Activated CD4-positive, alpha-beta T cell treated with anti-CD3 and anti-CD28 coated beads, Interleukin-2, amount 10 ng/mL, durations not matched to agents 24 days and 14 days (primary cell): ENCODE measurements at regions of chr10 and their contacts with region 1.

Region 1: GRCh38 chr10:4034907-4035598 is 250.0 kb upstream of the KLF6 start:
- DNase-seq: peak; percentile 83
- H3K4me3 Mint-ChIP-seq: peak overlapping the region; percentile 73
- H3K27ac Mint-ChIP-seq: peak overlapping the region; percentile 84
- H3K4me1 Mint-ChIP-seq: peaks cover 36% of the 10 kb centered on the region
- H3K27me3 Mint-ChIP-seq: no peaks in the 10 kb centered on the region

Region 2: GRCh38 chr10:3797750-3798149 is 237.3 kb before region 1 on chr10:
- intact Hi-C with region 1: loop called (anchors 5 kb)
- DNase-seq: no peak
- H3K4me3 Mint-ChIP-seq: peak overlapping the region; percentile 40
- H3K27ac Mint-ChIP-seq: peak overlapping the region; percentile 95
- H3K4me1 Mint-ChIP-seq: peaks cover 45% of the 10 kb centered on the region
- H3K27me3 Mint-ChIP-seq: no peaks in the 10 kb centered on the region

Region 3: GRCh38 chr10:3873728-3874461 is 161.2 kb before region 1 on chr10:
- intact Hi-C with region 1: loop called (anchors 5 kb)
- DNase-seq: peak; percentile 81
- H3K4me3 Mint-ChIP-seq: peak overlapping the region; percentile 14
- H3K27ac Mint-ChIP-seq: peak overlapping the region; percentile 88
- H3K4me1 Mint-ChIP-seq: peaks cover 52% of the 10 kb centered on the region
- H3K27me3 Mint-ChIP-seq: no peaks in the 10 kb centered on the region

Region 4: GRCh38 chr10:3972460-3973301 is 62.4 kb before region 1 on chr10:
- intact Hi-C with region 1: loop called (anchors 2 kb)
- DNase-seq: peak; percentile 87
- H3K4me3 Mint-ChIP-seq: peak overlapping the region; percentile 88
- H3K27ac Mint-ChIP-seq: peak overlapping the region; percentile 99
- H3K4me1 Mint-ChIP-seq: peaks cover 41% of the 10 kb centered on the region
- H3K27me3 Mint-ChIP-seq: no peaks in the 10 kb centered on the region

Region 5: DNA sequence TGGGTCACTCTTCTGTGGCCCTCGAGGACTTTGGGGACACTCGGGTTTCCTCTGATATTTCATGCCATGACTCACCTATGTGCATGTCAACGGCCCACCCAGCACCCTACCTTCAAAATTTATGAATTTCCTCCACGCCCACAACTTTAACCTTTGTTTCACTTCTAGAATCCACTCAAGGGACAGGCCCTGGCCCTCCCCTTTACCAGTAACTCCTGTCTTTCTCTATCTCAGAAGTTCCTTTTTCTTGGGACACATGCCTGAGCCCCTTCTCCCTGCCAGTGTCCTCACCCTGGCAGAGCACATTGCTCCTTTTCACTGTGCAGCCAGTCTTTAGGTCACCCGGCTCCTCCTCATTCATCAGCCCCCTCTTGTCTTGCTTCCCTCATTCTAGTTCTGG is 32.5 kb after region 1 on chr10:
- intact Hi-C with region 1: loop called (anchors 5 kb)
- DNase-seq: peak; percentile 69
- H3K4me3 Mint-ChIP-seq: no peak overlapping the region
- H3K27ac Mint-ChIP-seq: no peak overlapping the region
- H3K4me1 Mint-ChIP-seq: peaks cover 15% of the 10 kb centered on the region
- H3K27me3 Mint-ChIP-seq: no peaks in the 10 kb centered on the region

Region 6: DNA sequence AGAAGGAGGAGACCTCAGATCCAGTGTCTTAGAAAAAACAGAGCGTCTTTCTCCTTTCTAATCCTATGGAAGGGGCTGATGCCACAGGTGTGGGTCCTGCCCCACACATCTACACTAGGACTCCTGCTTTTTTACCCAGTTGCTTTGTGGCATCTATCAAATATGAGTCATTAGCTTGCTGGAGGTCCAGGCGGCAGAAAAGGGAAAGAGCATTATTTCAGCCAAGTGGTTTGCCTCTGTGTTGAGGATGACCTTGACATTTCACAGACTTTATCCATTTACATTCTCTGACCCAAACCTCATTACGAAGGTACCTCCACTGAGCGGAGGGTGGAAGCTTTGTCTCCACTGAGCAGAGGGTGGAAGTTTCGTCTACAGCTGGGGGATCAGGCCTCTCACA is 58.4 kb after region 1 on chr10:
- intact Hi-C with region 1: no loop called
- DNase-seq: peak; percentile 42
- H3K4me3 Mint-ChIP-seq: no peak overlapping the region
- H3K27ac Mint-ChIP-seq: no peak overlapping the region
- H3K4me1 Mint-ChIP-seq: peaks cover 1% of the 10 kb centered on the region
- H3K27me3 Mint-ChIP-seq: peaks cover 4% of the 10 kb centered on the region

Region 7: DNA sequence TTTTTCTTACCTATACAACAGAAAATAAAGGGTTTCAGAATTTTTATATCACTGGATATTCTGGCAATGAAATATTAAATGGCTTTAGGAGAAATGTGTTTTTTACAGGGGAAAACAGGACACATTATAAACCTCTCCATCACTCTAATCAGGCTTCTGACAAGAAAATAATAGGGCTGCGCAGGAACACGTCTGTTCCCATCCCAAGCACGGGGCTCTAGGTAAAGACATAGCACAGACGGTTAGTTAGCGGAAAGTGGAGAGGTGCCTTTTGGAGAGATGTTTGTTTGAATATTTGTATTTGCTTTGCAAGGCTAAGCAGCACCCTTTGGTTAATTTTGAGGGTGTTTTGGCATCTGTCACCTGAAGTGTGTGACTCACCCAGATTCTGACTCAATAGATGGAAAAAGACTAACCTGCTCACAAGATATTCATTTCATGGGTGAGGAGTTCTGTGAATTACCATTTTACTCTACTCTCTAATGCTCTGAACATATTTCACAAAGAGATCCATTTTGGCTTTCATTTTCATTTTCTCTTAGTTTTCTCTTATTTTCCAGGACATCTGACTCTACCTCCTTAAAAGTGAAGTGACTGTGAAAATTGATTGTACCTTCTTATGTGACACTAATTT is 616.5 kb after region 1 on chr10:
- intact Hi-C with region 1: loop called (anchors 1 kb)
- DNase-seq: peak; percentile 74
- H3K4me3 Mint-ChIP-seq: peak overlapping the region; percentile 75
- H3K27ac Mint-ChIP-seq: peak overlapping the region; percentile 92
- H3K4me1 Mint-ChIP-seq: peaks cover 32% of the 10 kb centered on the region
- H3K27me3 Mint-ChIP-seq: no peaks in the 10 kb centered on the region